Aorta (tissue), 5 donors: ENCODE measurements at regions of chr18 and their contacts with region 1.

Region 1: DNA sequence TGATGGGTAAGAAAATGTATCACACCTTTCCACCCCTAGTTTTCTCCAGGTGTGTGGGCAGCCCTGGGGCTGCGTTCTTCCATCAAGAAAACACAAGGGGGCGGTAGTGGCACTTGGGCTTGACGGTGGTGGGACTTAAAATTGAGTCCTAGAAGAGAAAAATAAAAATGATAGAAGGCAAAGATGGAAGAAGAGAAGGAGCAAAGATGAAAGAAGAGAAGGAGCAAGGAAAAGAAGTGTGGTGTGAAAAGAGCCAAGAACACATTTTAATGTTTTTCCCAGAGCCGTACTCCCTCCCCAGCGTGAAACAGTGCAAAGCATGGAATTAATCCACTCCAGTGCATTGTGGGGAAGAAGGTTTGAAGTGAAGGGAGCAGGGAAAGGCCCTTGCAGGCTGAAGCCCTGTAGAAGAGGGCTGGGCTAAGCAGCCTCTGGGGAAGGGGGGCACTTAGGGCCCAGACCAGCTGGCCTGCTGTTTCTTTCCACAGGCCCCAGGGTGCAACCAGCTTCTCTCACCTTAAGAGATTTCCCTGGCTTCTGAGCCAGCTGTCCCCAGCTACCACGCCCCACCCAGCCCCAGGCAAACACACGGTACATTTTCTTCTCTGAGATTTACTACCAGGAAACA is 256.8 kb downstream of the RNF152 start:
- DNase-seq: peak in 1 of 2 donors; percentile 57
- ATAC-seq: peak; percentile 82
- H3K4me3 ChIP-seq: no peak overlapping the region
- H3K27ac ChIP-seq: no peak overlapping the region
- H3K4me1 ChIP-seq: no peaks in the 10 kb centered on the region
- H3K27me3 ChIP-seq: no peaks in the 10 kb centered on the region

Region 2: DNA sequence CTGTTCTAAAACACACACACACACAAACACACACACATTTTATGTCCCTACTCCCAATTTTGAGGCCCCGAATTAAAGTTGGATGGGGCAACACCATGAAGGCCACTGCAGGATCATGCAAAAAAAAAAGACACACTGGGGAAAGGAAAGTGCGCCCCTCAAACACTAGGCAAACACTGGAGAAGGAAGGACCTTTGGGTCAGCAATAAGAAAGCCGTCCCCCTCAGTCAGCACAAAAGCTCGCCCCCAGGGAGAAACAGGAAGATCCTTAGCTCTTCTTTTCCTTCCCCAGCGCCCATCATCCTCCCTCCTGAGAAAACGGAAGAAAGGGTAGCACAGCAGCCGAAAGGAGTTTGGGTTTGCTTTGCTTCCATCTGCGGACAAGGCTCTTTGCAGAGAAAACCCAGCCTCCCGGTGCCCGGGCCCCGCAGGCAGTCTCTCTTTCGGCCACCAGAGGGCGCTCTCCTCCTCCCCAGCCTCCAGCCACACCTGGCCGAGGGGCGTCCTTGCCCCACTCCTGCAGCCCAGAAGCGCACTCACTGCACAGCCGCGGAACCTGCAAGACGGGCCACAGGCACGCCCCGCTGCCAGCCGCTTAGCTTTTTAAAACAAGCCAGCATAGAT is 54.3 kb before region 1 on chr18:
- intact Hi-C with region 1: loop called in 1 of 2 experiments (anchors 5 kb)
- DNase-seq: peak; percentile 77 to 93
- ATAC-seq: peak; percentile 94
- H3K4me3 ChIP-seq: peak overlapping the region in 1 of 2 donors; percentile 52
- H3K27ac ChIP-seq: no peak overlapping the region
- H3K4me1 ChIP-seq: peaks cover 0 to 4% of the 10 kb centered on the region in 2 donors
- H3K27me3 ChIP-seq: no peaks in the 10 kb centered on the region

Region 3: DNA sequence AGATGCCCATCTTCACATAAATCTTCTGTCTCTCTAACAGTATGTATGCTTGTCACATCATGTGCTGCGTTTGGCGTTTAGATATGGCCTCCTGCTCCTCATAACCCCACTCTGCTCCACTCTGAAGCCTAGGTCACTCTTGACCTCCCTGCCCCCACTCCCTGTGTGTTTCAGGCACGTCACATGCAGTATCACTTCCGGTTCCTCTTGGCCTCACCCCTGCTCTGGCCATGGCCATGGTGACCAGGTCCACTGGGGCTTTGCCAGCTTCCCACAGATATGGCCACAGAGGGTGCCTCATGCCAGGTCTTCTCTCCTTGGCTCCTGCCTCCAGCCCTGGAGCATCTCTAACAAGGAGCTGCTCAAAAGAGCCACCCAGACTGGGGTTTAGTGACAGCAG is 96.8 kb after region 1 on chr18:
- intact Hi-C with region 1: loop called in 1 of 2 experiments (anchors 1 kb)
- DNase-seq: peak; percentile 56 to 78
- ATAC-seq: no peak
- H3K4me3 ChIP-seq: no peak overlapping the region
- H3K27ac ChIP-seq: peak overlapping the region in 1 of 2 donors; percentile 69
- H3K4me1 ChIP-seq: peaks cover 0 to 6% of the 10 kb centered on the region in 2 donors
- H3K27me3 ChIP-seq: no peaks in the 10 kb centered on the region

Region 4: DNA sequence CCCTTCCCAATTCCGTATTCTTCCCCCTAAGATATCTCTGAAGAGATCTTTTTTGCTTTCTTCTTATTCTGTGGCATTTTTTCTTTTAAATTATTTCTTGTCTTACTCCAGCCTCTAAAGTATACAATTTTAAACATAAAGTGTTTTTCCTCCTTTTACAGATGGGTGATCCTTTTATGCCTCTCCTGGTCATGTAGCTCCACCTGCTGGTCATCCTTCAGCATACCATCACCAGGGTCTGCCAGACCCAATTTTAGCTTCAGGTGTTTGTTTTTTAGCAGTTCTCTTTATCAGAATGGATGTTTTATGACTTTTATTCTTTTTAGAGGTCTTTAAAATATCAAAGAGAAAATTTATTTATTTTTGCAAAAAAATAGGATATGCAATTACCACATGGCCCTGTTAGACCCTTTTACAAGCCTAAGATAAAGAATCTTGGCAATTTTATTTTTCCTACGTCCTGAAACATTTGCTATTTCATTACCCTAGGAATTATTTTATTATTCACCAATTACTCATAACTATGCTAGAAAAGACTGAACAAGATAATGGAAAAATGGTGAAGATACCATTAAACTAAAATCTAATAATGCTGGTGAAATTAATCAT is 495.4 kb after region 1 on chr18:
- intact Hi-C with region 1: loop called (anchors 1 to 5 kb)
- DNase-seq: peak in 1 of 2 donors; percentile 49
- ATAC-seq: no peak
- H3K4me3 ChIP-seq: no peak overlapping the region
- H3K27ac ChIP-seq: no peak overlapping the region
- H3K4me1 ChIP-seq: no peaks in the 10 kb centered on the region
- H3K27me3 ChIP-seq: no peaks in the 10 kb centered on the region